ENCODE measurements at regions of chr6 and their contacts with region 1.

Region 1: GRCh38 chr6:108862479-108863191 is 14.4 kb downstream of the ARMC2 start:
- DNase-seq: no peak
- H3K4me3 ChIP-seq: no peak overlapping the region
- H3K27ac ChIP-seq: no peak overlapping the region
- H3K4me1 ChIP-seq: no peaks in the 10 kb centered on the region
- CTCF ChIP-seq: no peak

Region 2: DNA sequence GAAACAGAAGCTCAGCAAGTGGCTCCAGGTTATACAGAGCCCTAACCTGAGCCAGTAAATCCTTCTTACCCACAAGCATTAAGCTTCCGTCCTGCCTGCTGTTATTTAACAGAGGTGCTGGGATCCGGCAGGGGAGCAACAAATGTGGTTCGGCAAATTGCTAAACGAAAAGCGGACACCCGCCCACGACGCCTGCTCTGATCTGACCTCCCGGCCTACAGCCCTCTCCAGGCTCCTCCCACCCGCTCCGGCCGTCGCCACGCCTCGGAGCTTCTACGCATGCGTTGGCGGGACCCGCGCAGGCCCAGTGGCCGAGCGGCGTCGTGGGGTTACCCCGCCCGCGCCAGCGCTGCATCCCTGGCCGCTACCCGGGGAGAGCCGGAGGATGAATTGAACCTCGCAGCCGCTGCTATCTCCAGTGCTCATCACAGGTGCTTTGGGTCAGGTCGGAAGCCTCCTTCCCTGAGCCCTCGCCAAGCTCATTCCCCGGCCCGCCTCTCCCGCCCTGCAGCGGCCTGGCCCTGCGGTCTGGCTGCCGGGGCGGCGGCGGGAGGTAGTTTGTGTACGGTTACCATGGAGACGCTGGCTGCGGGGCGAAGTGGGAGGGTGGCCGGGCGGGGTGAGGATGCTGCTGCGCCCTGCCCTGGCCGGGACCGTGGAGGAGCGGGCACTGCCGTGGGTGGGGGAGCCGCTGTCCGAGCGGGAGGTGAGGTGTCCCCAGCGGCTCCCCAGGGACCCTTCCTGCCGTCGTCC is 14.3 kb before region 1 on chr6 and contains the start of gene ARMC2:
- CTCF ChIA-PET with region 1: interaction called, 3 read pairs
- POLR2A ChIA-PET with region 1: interaction called, 15 read pairs
- intact Hi-C with region 1: no loop called
- DNase-seq: peak; percentile 92
- H3K4me3 ChIP-seq: peak within 1 kb of the TSS; percentile 80
- H3K27ac ChIP-seq: peak within 1 kb of the TSS; percentile 28
- H3K4me1 ChIP-seq: peaks cover 20% of the 10 kb centered on the region
- CTCF ChIP-seq: no peak
- total RNA-seq, gene ARMC2: 0.21 and 2.6 TPM in 2 replicates

Measured in OCI-LY7 (cell line).